Gastrocnemius medialis (tissue), 4 donors: ENCODE measurements at regions of chr10 and their contacts with region 1.

Region 1: DNA sequence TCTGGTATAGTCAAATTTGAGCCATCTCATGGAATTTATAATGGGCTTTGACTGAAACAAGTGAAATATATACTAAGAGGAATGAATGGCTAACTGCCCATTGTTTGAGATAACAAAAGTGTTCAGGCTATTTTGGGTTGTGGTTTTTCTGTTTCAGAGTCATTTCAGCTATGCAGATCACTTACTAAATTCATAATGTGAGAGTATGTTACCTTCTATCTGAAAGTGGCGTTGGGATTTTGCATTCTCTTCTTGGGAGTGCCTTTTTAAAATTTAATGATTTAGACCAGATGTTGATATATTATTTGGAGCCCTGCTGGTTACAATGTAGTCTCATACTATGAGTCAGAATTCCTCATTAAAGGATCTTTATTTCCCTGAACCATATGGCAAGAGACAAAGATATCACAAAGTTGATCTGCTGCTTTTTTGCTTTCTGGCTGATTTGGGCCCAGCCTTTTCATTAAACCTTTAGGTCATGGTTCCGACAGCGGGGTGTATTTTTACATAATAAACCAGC is 10.4 kb downstream of the VCL start:
- DNase-seq: no peak
- ATAC-seq: no peak
- H3K4me3 ChIP-seq: no peak overlapping the region
- H3K27ac ChIP-seq: peak overlapping the region in 2 of 4 donors; percentile 6 to 17
- H3K4me1 ChIP-seq: peaks cover 64 to 76% of the 10 kb centered on the region in 2 donors
- H3K27me3 ChIP-seq: no peaks in the 10 kb centered on the region
- CTCF ChIP-seq: no peak
- POLR2A ChIP-seq: no peak

Region 2: GRCh38 chr10:73981812-73982211 is 26.5 kb before region 1 on chr10:
- in situ Hi-C with region 1: no loop called
- intact Hi-C with region 1: loop called (anchors 1 kb)
- DNase-seq: no peak
- ATAC-seq: peak in 1 of 2 donors; percentile 49
- H3K4me3 ChIP-seq: no peak overlapping the region
- H3K27ac ChIP-seq: no peak overlapping the region
- H3K4me1 ChIP-seq: peaks cover 8 to 10% of the 10 kb centered on the region in 2 donors
- H3K27me3 ChIP-seq: no peaks in the 10 kb centered on the region
- CTCF ChIP-seq: no peak
- POLR2A ChIP-seq: no peak

Region 3: DNA sequence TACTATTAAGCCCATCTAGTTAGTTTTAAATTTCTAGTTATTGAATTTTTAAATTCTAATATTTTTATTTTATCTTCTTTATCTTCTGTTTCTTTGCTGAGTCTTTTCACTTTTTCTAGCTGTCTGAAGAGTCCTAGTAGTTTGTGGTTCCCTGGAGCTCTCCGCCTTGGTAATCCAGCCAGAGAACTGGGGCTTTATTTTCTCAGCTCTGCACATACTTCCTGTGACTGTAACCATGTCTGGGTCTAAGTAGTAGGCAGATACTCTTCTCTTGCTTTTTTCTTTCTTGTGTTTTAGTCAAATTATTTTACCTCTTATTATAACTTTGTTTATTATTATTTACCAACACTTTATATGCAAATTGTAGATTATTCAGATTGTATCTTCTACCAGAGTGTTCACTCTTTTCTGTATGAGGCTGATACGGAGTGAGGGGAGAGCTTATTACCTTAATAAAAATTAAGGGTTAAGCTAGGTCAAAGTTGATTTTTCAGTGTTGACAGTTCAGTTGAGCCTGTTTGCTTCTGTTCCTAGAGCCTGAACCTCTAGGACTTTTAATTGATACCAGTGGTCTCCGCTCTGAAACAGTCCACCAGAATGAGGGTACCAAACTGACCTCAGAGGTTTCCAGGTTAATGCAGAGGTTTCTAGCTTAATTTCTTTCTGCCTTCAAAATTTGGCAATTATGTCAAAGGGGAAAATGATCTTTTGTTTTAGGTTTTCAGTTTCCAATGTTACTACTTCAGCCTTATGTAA is 298.1 kb after region 1 on chr10:
- in situ Hi-C with region 1: no loop called
- intact Hi-C with region 1: no loop called
- DNase-seq: no peak
- ATAC-seq: no peak
- H3K4me3 ChIP-seq: no peak overlapping the region
- H3K27ac ChIP-seq: no peak overlapping the region
- H3K4me1 ChIP-seq: peaks cover 3 to 7% of the 10 kb centered on the region in 2 donors
- H3K27me3 ChIP-seq: no peaks in the 10 kb centered on the region
- CTCF ChIP-seq: no peak
- POLR2A ChIP-seq: no peak